ENCODE measurements at regions of chr14 and their contacts with region 1.

Region 1: GRCh38 chr14:93663317-93663716 is 125.0 kb downstream of the PRIMA1 start:
- DNase-seq: no peak
- ATAC-seq: no peak
- H3K4me3 Mint-ChIP-seq: no peak overlapping the region
- H3K27ac Mint-ChIP-seq: no peak overlapping the region
- H3K4me1 Mint-ChIP-seq: no peaks in the 10 kb centered on the region
- H3K27me3 Mint-ChIP-seq: peaks cover 15% of the 10 kb centered on the region

Region 2: GRCh38 chr14:94009767-94010166 is 346.4 kb after region 1 on chr14:
- CTCF ChIA-PET with region 1: no interaction called
- POLR2A ChIA-PET with region 1: no interaction called
- intact Hi-C with region 1: loop called in 1 of 2 experiments (anchors 10 kb)
- DNase-seq: no peak
- ATAC-seq: peak; percentile 45
- H3K4me3 Mint-ChIP-seq: no peak overlapping the region
- H3K27ac Mint-ChIP-seq: no peak overlapping the region
- H3K4me1 Mint-ChIP-seq: peaks cover 33% of the 10 kb centered on the region
- H3K27me3 Mint-ChIP-seq: peaks cover 4% of the 10 kb centered on the region

Measured in activated CD4-positive, alpha-beta T cell treated with anti-CD3 and anti-CD28 coated beads for 36 hours (primary cell).